ENCODE measurements at regions of chr7 and their contacts with region 1.

Region 1: DNA sequence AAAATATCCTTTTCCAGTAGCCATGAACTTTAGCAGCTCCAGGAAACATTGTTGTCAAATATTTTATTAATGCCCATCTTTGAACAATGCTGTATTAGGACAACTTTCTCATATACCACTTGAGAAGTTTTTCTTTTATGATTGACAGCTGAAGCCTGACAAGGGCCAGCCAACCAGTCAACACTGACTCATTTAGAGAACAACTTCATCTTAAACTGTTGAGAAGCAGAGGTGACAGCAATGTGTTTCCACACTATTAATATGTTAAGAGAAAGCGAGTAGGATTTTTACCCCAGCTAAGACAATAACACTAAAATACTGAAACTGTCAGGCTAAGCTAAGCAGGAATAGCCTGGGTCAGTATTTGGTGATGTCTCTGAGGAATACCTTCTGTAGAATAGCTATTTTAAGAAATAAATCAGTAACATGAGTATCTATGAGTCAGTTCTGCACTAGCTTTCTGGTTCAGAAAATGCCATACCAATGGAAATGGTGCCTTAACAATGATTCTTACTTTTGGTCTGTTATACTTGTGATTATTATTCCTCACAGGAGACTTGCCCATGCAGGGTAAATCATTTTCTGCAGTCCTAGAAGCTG is 168.8 kb upstream of the POT1 start:
- DNase-seq: no peak
- ATAC-seq: no peak
- H3K4me3 ChIP-seq: no peak overlapping the region
- H3K4me3 Mint-ChIP-seq: no peak overlapping the region
- H3K27ac ChIP-seq: no peak overlapping the region
- H3K27ac Mint-ChIP-seq: no peak overlapping the region
- H3K4me1 ChIP-seq: no peaks in the 10 kb centered on the region
- H3K4me1 Mint-ChIP-seq: no peaks in the 10 kb centered on the region
- H3K27me3 ChIP-seq: no peaks in the 10 kb centered on the region
- H3K27me3 Mint-ChIP-seq: no peaks in the 10 kb centered on the region

Region 2: DNA sequence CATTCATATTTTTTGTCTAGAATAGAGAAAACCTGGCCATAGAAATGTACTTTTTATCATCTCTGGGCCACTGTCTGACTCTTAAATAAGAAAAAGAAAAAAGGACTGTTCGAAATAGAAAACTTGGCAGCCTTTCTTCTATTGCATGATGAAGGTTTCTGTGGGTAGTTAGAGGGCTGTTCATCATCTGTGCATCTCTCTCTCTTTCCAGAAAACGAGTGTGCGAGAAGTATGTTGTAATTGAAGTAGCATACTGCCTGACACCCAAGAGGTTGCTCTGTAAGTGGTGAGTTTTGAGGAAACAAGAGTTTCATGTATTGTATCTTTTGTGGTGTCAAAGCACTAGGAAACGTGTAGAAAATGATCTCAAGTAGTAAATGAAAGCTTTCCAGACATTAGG is 722.4 kb before region 1 on chr7:
- CTCF ChIA-PET with region 1: no interaction called
- POLR2A ChIA-PET with region 1: no interaction called
- intact Hi-C with region 1: loop called in 1 of 2 experiments (anchors 10 kb)
- DNase-seq: no peak
- ATAC-seq: no peak
- H3K4me3 ChIP-seq: no peak overlapping the region
- H3K4me3 Mint-ChIP-seq: no peak overlapping the region
- H3K27ac ChIP-seq: no peak overlapping the region
- H3K27ac Mint-ChIP-seq: no peak overlapping the region
- H3K4me1 ChIP-seq: no peaks in the 10 kb centered on the region
- H3K4me1 Mint-ChIP-seq: no peaks in the 10 kb centered on the region
- H3K27me3 ChIP-seq: no peaks in the 10 kb centered on the region
- H3K27me3 Mint-ChIP-seq: no peaks in the 10 kb centered on the region

Region 3: GRCh38 chr7:124765401-124766352 is 332.8 kb before region 1 on chr7 and contains the start of gene GPR37:
- CTCF ChIA-PET with region 1: no interaction called
- POLR2A ChIA-PET with region 1: no interaction called
- intact Hi-C with region 1: no loop called
- DNase-seq: peak in 5 of 9 donors; percentile 3 to 62 (median 4)
- ATAC-seq: peak; percentile 52
- H3K4me3 ChIP-seq: peak within 1 kb of the TSS; percentile 19
- H3K4me3 Mint-ChIP-seq: peak within 1 kb of the TSS; percentile 78 to 93 (median 88)
- H3K27ac ChIP-seq: no peak within 1 kb of the TSS
- H3K27ac Mint-ChIP-seq: peak within 1 kb of the TSS in 1 of 9 donors; percentile 3
- H3K4me1 ChIP-seq: peaks cover 0 to 9% of the 10 kb centered on the region in 2 donors
- H3K4me1 Mint-ChIP-seq: peaks cover 9 to 22% (median 16%) of the 10 kb centered on the region in 7 donors
- H3K27me3 ChIP-seq: no peaks in the 10 kb centered on the region
- H3K27me3 Mint-ChIP-seq: peaks cover 53 to 71% (median 62%) of the 10 kb centered on the region in 5 donors
- total RNA-seq, gene GPR37: not detected